ENCODE measurements at regions of chr14 and their contacts with region 1.

Region 1: GRCh38 chr14:67583711-67584644 is 16.1 kb downstream of the PIGH start:
- DNase-seq: peak in 3 of 5 donors; percentile 50 to 77 (median 72)
- H3K4me3 ChIP-seq: no peak overlapping the region
- H3K27ac ChIP-seq: no peak overlapping the region
- H3K4me1 ChIP-seq: peaks cover 0 to 9% (median 2%) of the 10 kb centered on the region in 3 donors
- H3K27me3 ChIP-seq: no peaks in the 10 kb centered on the region
- CTCF ChIP-seq: peak; percentile 75

Region 2: DNA sequence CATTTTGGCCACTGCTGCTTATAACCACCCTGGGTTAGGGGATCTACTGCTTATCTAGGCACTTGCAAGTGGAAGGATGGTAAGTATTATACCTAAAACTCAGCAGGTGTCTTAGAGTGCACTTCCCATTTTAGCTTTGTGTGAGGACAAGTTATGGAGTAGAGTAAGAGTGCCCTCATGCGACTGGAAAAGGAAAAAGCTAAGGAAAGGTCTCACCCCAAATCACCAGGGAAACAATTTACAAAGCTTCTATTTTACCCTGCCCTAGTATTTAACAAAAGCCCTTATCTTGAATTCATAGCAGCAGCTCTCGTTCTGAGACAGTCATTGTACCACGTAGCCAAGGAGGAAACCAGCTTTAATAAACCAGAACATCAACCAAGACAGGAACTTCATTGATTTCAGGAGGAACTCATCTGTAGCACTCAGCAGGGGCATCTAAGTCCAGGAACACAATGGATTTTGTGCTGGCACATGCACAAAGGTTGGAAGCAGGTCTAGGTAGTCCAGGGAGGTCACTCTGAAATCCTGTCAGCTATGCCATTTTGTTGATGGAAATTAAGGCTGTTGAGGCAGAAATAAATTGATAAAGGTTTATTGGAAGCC is 120.6 kb after region 1 on chr14:
- intact Hi-C with region 1: loop called (anchors 10 kb)
- DNase-seq: peak in 3 of 5 donors; percentile 38 to 77 (median 74)
- H3K4me3 ChIP-seq: no peak overlapping the region
- H3K27ac ChIP-seq: no peak overlapping the region
- H3K4me1 ChIP-seq: peaks cover 0 to 8% (median 0%) of the 10 kb centered on the region in 3 donors
- H3K27me3 ChIP-seq: no peaks in the 10 kb centered on the region
- CTCF ChIP-seq: peak; percentile 74

Measured in kidney (tissue), 22 donors.